Vagina (tissue), 2 donors: ENCODE measurements at regions of chr3 and their contacts with region 1.

Region 1: DNA sequence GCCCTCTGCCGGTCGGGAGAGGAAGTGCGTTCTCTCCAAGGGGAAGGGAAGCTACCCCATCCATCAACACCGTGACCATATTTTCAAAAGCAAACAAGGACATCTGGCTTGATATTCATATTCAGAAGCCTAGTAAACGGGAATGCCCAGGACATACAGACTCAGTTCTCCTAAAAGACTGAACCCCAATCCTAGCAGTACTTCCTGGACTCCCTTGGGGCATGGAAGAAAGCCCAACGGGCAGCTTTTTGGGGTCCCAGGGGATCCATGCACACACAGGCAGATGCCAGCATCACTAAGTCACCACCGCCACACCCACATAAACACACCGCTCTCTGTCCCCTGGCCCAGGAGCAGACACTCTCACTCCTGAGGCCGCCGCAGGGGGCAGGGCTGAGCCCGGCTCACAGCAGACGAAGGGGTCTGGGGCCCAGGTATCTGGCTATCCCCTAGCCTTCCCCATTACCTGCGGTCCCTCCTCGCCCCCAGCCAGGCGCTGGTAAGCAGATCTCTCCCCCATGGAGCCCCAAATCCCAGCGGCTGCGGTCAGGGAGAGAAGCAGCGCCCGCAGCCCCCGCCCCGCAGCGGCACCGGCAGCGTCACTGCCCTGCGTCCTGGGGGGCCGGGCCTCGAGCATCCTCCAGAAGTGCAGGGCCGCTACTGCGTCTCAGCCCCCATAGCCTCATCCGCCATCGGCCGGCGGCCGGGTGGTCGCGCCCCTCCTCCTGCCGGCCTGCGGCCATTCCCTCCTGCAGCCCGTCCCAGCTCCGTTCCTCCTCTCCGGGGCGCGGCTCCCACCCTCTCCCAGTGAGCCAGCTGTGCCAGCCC is 13.4 kb downstream of the TNK2 start:
- DNase-seq: no peak
- H3K4me3 ChIP-seq: peak overlapping the region; percentile 61 to 75
- H3K27ac ChIP-seq: peak overlapping the region; percentile 89
- H3K4me1 ChIP-seq: peaks cover 59% of the 10 kb centered on the region
- H3K27me3 ChIP-seq: no peaks in the 10 kb centered on the region
- CTCF ChIP-seq: peak; percentile 87 to 89 (median 87)
- POLR2A ChIP-seq: no peak

Region 2: DNA sequence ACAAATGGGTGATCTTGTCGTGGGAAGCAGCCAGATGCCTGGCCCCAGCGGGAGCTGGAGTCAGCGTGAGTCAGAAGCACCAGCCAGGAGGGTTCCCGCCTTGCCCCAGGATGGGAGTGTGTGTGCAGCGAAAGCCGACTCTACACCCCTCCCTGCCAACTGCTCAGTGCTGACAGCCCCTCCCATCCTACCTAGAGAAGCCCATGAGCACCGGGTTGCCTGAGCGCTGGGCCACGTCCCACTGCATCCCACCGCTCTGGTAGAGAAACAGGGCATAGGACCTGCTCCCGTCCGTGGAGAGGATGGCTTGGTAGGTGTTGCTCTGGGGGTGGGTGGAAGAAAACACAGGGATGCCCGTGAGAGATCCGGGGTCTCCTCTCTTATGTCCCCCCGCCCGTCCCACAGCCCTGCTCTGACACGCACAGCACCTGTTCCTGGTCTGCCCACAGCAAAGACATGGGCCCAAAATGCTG is 126.1 kb before region 1 on chr3:
- intact Hi-C with region 1: no loop called
- DNase-seq: no peak
- H3K4me3 ChIP-seq: no peak overlapping the region
- H3K27ac ChIP-seq: no peak overlapping the region
- H3K4me1 ChIP-seq: no peaks in the 10 kb centered on the region
- H3K27me3 ChIP-seq: no peaks in the 10 kb centered on the region
- CTCF ChIP-seq: no peak
- POLR2A ChIP-seq: no peak

Region 3: GRCh38 chr3:195859846-195860810 is 34.9 kb before region 1 on chr3:
- intact Hi-C with region 1: loop called (anchors 2 kb)
- DNase-seq: no peak
- H3K4me3 ChIP-seq: no peak overlapping the region
- H3K27ac ChIP-seq: no peak overlapping the region
- H3K4me1 ChIP-seq: peaks cover 22% of the 10 kb centered on the region
- H3K27me3 ChIP-seq: no peaks in the 10 kb centered on the region
- CTCF ChIP-seq: no peak
- POLR2A ChIP-seq: no peak

Region 4: DNA sequence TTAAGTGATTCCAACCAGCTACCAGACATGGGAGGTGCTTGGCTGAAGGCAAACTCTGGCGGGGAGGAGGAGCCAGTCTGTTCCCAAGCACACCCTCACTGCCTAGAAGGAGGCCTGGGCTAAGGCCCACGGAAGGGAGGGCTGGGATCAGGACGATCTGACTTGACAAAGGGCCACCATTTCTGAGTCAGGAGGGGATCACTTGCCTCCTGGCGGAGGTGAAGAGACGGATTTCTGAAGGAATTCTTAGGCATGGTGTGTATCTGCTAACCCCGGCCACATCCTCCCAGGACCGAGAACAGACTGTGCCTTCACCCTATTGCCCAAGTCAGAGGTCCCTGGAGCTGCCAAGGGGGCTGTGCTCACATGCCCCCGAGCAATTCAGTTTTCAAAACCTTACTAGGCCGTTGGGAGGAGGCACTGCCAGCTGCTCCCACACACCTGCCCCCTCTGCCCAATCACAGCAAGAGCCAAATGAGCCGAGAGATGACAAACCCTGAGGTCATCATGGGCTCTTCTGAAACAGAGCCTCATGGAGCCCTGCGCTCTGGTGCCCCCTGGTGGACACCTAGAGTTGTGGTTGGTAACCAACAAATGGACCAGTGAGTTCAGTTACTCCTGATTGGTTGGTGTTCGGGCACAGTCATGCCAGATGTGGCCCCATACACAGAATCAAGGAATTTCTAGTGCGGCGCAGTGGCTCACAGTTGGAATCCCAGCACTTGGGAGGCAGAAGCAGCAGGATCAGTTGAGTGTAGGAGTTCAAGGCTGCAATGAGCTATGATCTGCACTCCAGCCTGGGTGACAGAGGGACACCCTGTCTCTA is 19.9 kb after region 1 on chr3:
- intact Hi-C with region 1: loop called (anchors 2 kb)
- DNase-seq: peak in 1 of 2 donors; percentile 98
- H3K4me3 ChIP-seq: no peak overlapping the region
- H3K27ac ChIP-seq: peak overlapping the region; percentile 82
- H3K4me1 ChIP-seq: peaks cover 33% of the 10 kb centered on the region
- H3K27me3 ChIP-seq: no peaks in the 10 kb centered on the region
- CTCF ChIP-seq: peak; percentile 85 to 92 (median 89)
- POLR2A ChIP-seq: no peak